ENCODE measurements at regions of chr6 and their contacts with region 1.

Region 1: GRCh38 chr6:31079656-31080261 is 32.6 kb downstream of the C6orf15 start:
- DNase-seq: peak; percentile 82
- ATAC-seq: peak; percentile 91
- H3K4me3 Mint-ChIP-seq: peak overlapping the region; percentile 49
- H3K27ac Mint-ChIP-seq: no peak overlapping the region
- H3K4me1 Mint-ChIP-seq: peaks cover 13% of the 10 kb centered on the region
- H3K27me3 Mint-ChIP-seq: no peaks in the 10 kb centered on the region

Region 2: DNA sequence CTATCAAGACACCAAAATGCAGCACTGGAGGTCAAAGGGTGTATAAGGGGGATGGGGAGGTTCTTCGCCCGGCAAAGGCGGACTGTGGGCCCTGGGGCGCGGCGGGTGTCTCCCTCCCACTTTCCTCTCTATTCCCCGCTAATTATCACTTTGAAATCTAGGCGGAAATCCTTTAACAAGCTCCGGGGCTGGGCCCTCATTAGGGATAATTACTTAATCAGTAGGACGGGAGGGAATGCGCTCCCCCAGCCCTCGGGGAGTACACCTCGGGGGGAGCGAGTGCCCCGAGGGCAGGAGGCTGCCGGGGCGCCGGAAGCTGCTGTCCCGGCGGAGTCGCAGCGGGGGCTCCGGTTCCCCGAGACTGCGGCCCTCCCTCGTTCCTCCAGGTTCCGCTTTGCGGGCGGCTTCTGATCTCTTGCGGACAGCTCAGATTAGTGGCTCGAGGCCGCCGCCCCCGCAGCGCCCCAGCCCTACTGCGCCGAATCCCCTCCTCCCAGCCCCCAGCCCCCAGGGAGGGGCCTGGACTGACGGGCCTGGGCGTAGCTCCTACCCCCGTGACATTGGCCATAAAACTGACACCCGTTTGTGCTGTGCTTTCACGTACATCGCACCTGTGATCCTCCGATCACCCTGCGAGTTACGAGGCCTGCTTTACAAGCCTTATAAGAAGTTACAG is 124.3 kb before region 1 on chr6:
- CTCF ChIA-PET with region 1: interaction called, 10 read pairs
- POLR2A ChIA-PET with region 1: no interaction called
- intact Hi-C with region 1: no loop called
- DNase-seq: peak; percentile 83
- ATAC-seq: peak; percentile 90
- H3K4me3 Mint-ChIP-seq: peak overlapping the region; percentile 67
- H3K27ac Mint-ChIP-seq: peak overlapping the region; percentile 64
- H3K4me1 Mint-ChIP-seq: peaks cover 9% of the 10 kb centered on the region
- H3K27me3 Mint-ChIP-seq: peaks cover 22% of the 10 kb centered on the region

Region 3: DNA sequence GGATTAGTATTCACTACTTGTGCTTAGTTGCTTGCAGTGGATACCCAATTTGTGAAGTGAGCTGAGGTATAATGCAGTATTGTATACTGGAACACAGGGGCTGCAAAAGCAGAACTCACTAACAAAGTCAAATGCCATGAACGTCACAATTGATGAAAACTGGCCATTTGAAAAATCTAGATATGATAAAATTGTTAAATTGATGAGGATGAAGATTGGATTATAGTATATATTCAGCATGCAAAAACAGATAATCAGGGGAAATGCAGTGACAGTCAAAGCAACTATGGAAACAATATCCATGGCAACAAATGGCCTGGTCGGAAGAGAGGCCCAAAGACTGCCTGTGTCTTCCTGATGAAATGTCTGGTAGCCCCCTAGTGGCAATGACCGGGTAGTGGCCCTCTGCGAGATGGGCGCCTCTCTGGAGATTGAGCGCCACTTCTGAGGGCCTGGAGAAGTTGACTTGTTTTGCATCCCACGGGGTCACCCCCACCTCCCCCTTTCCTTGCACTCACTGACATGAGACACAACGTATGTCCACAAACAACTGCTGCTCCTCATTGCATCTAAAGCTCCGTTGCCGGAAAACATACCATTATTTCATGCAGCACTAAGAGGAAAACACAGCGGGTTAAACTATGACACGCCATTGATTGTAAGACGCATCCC is 11.0 kb before region 1 on chr6:
- CTCF ChIA-PET with region 1: interaction called, 26 read pairs
- POLR2A ChIA-PET with region 1: no interaction called
- intact Hi-C with region 1: no loop called
- DNase-seq: peak; percentile 82
- ATAC-seq: peak; percentile 99
- H3K4me3 Mint-ChIP-seq: no peak overlapping the region
- H3K27ac Mint-ChIP-seq: no peak overlapping the region
- H3K4me1 Mint-ChIP-seq: peaks cover 2% of the 10 kb centered on the region
- H3K27me3 Mint-ChIP-seq: peaks cover 2% of the 10 kb centered on the region

Region 4: GRCh38 chr6:31094389-31094881 is 14.7 kb after region 1 on chr6:
- CTCF ChIA-PET with region 1: interaction called, 19 read pairs
- POLR2A ChIA-PET with region 1: no interaction called
- intact Hi-C with region 1: no loop called
- DNase-seq: peak; percentile 49
- ATAC-seq: peak; percentile 88
- H3K4me3 Mint-ChIP-seq: no peak overlapping the region
- H3K27ac Mint-ChIP-seq: peak overlapping the region; percentile 79
- H3K4me1 Mint-ChIP-seq: peaks cover 41% of the 10 kb centered on the region
- H3K27me3 Mint-ChIP-seq: no peaks in the 10 kb centered on the region

Region 5: DNA sequence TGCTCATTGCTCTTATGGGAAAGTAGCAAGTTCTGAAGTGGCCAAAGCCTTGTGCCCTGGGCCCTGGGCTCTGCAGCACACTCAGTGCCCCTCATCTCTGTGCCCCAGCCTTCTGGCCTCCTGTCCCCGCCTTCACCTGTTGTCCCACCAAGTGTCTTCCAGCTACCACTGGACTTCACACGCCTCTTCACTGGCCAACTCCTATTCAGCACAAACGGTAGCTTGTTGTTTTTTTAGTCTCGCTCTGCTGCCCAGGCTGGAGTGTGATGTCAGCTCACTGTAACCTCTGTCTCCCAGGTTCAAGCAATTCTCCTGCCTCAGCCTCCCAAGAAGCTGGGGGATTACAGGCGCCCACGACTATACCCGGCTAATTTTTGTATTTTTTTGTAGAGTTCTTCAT is 73.0 kb after region 1 on chr6:
- CTCF ChIA-PET with region 1: no interaction called
- POLR2A ChIA-PET with region 1: no interaction called
- intact Hi-C with region 1: no loop called
- DNase-seq: no peak
- ATAC-seq: no peak
- H3K4me3 Mint-ChIP-seq: no peak overlapping the region
- H3K27ac Mint-ChIP-seq: no peak overlapping the region
- H3K4me1 Mint-ChIP-seq: peaks cover 7% of the 10 kb centered on the region
- H3K27me3 Mint-ChIP-seq: no peaks in the 10 kb centered on the region